Esophagus squamous epithelium (tissue), 5 donors: ENCODE measurements at regions of chr1 and their contacts with region 1.

Region 1: GRCh38 chr1:41573785-41574713 is 89.6 kb upstream of the EDN2 start:
- DNase-seq: no peak
- H3K4me3 ChIP-seq: no peak overlapping the region
- H3K27ac ChIP-seq: no peak overlapping the region
- H3K4me1 ChIP-seq: peaks cover 0 to 13% (median 3%) of the 10 kb centered on the region in 3 donors
- H3K27me3 ChIP-seq: no peaks in the 10 kb centered on the region
- CTCF ChIP-seq: peak; percentile 62 to 92 (median 86)
- POLR2A ChIP-seq: no peak

Region 2: DNA sequence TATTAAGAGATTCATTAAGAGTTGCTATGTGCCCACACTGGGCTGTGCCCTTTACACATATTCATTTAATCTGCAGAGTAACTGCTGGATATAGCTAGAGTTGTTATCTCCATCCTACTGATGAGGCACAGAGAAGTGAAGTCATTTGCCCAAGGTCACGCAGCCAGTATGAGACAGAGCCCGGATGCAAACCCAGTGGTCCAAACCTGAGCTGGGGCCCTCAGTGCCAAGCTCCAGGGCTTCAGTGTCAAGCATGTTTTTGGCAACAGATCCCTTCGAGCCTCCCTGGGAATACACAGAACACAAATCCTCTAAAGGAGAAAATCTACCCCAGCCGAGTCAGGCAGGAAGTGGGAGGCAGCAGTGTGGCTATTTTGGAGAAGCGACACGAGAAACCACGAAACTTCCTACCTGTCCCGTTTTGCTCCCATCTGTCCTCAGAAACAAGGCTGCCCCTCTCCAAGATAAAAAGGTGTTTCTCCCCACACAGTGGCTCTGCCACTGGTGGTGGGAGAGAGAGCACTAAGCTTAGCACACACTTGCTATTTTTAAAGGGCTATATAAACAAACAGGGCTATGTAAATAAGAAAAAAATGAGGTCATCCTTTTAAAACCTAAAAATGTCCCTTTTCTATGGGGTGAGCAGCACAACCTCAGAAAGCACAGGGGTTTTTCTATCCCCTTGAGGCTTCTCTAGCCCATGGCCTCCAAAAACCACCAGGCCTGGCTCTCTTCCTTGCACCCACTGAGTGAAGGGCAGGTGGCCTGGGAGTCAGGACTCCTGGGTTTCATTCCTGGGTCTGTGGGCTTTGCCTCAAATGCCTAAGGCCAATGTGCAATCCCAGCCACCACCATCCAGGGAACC is 49.0 kb after region 1 on chr1:
- intact Hi-C with region 1: no loop called
- DNase-seq: no peak
- H3K4me3 ChIP-seq: no peak overlapping the region
- H3K27ac ChIP-seq: peak overlapping the region in 1 of 4 donors; percentile 3
- H3K4me1 ChIP-seq: peaks cover 35 to 86% (median 70%) of the 10 kb centered on the region in 3 donors
- H3K27me3 ChIP-seq: no peaks in the 10 kb centered on the region
- CTCF ChIP-seq: no peak
- POLR2A ChIP-seq: no peak

Region 3: DNA sequence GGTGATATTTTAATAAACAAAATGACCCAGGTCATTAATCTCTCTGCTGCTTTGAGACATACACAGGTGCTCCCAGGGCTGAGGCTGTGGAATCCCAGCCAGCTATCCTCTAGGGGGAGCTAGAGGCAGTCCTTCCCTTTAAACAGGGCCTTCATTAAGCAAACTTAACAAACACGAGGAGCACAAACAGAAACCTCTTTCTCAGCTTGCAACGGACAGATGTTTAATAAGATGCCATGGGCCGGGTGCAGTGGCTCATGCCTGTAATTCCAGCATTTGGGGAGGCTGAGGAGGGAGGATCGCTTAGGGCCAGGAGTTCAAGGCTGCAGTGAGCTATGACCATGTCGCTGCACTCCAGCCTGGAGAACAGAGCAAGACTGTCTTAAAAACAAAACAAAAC is 238.0 kb after region 1 on chr1:
- intact Hi-C with region 1: loop called (anchors 5 kb)
- DNase-seq: no peak
- H3K4me3 ChIP-seq: no peak overlapping the region
- H3K27ac ChIP-seq: no peak overlapping the region
- H3K4me1 ChIP-seq: peaks cover 0 to 21% (median 0%) of the 10 kb centered on the region in 3 donors
- H3K27me3 ChIP-seq: no peaks in the 10 kb centered on the region
- CTCF ChIP-seq: peak in 5 of 6 experiments; percentile 31 to 74 (median 50)
- POLR2A ChIP-seq: no peak

Region 4: DNA sequence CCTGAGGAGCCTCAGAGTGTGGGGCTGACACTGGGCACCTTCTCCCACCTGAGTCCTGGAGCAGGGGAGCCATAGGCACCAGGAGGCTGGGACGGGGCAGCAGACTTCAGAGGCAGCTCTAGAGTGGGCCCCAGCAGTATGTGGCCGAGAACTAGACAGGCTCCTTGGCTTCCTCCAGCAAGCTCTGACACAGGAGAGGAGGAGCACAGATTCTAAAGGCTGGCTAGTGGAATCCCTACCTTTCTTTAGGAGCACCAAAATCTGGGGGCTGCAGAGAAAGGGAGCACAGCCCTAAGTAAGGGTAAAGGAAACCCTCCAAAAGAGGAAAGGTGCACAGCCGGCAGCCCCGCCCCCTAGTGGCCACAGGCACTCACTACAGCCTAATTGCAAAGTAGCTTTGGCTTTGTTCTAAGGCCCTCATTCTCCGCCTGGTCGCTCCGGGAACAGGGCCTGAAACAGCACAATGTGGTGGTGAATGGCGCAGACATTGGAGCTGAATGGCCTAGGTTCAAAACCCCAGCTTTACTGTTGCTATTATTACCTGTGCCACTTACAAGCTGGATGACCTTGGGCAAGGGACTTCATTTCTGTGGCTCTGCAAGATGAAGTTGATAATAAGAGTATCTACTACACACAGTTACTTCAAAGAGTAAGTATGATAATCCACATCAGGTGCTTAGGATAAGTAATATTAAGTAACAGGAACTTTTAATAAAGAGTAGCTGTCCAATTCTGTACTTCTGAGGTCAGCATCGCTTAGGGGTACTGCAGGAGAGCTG is 599.3 kb after region 1 on chr1:
- intact Hi-C with region 1: loop called (anchors 10 kb)
- DNase-seq: no peak
- H3K4me3 ChIP-seq: peak overlapping the region in 2 of 4 donors; percentile 2 to 5
- H3K27ac ChIP-seq: peak overlapping the region; percentile 52 to 75 (median 73)
- H3K4me1 ChIP-seq: peaks cover 29 to 82% (median 57%) of the 10 kb centered on the region in 3 donors
- H3K27me3 ChIP-seq: no peaks in the 10 kb centered on the region
- CTCF ChIP-seq: peak; percentile 90 to 99 (median 93)
- POLR2A ChIP-seq: no peak